ENCODE measurements at regions of chr10 and their contacts with region 1.

Region 1: GRCh38 chr10:89701238-89702120 is at the start of gene KIF20B:
- DNase-seq: peak; percentile 96 to 97
- H3K4me3 ChIP-seq: peak within 1 kb of the TSS; percentile 16 to 62 (median 58)
- H3K27ac ChIP-seq: peak within 1 kb of the TSS; percentile 55 to 92 (median 85)
- H3K4me1 ChIP-seq: peaks cover 16 to 23% of the 10 kb centered on the region in 2 donors
- H3K27me3 ChIP-seq: no peaks in the 10 kb centered on the region
- CTCF ChIP-seq: peak in 5 of 6 experiments; percentile 12 to 83 (median 53)
- POLR2A ChIP-seq: peak in 1 of 2 donors; percentile 97
- total RNA-seq, gene KIF20B: 3.8 to 6.2 (median 4.5) TPM

Region 2: GRCh38 chr10:89426230-89426868 is 275.1 kb before region 1 on chr10:
- intact Hi-C with region 1: loop called (anchors 5 kb)
- DNase-seq: no peak
- H3K4me3 ChIP-seq: no peak overlapping the region
- H3K27ac ChIP-seq: no peak overlapping the region
- H3K4me1 ChIP-seq: peaks cover 4 to 13% of the 10 kb centered on the region in 2 donors
- H3K27me3 ChIP-seq: no peaks in the 10 kb centered on the region
- CTCF ChIP-seq: peak; percentile 46 to 91 (median 84)
- POLR2A ChIP-seq: no peak

Region 3: DNA sequence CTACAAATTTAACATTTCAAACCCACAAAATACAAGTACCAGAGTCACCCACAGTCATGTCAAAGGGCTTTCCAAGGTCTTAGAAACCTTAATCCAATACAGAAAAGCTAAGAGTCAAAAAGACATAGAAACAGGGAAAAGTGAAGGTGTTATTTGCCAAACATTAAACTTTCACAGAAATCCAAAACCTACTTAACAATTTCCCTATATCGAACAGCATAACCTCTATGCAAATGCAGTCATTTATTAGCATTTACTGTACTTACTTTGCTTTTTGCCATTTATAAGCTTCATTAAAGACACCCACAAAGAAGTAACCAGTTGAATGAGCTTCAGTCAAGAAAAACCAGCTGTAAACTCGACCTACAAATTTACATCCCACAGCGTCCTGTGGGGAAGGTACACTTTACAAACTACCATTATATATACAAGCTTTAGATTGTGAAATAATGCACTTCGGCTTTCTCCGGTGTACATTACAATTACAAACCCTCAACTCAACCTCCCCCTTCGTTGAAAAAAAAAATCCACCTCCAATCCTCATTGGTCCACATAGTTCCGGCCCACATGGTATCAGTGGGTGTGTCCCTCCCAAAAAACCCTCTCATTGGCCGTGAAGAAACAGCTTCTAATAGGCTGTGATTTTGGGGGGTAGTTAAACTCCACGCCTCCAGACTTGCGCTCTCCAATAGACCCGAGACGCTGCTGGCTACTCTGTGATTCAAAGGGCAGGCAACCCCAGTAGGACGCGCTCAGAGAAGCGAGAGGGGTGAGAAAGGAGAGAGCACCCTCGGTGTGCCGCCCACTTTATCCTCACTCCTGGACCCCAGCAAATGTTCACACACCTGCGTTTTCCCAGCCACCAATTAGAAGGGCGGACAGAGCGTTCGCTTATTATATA is 57.8 kb before region 1 on chr10:
- intact Hi-C with region 1: loop called (anchors 10 kb)
- DNase-seq: peak; percentile 88 to 89
- H3K4me3 ChIP-seq: peak overlapping the region in 2 of 3 donors; percentile 70
- H3K27ac ChIP-seq: peak overlapping the region; percentile 96 to 100 (median 98)
- H3K4me1 ChIP-seq: peaks cover 10 to 20% of the 10 kb centered on the region in 2 donors
- H3K27me3 ChIP-seq: no peaks in the 10 kb centered on the region
- CTCF ChIP-seq: peak in 1 of 6 experiments; percentile 7
- POLR2A ChIP-seq: peak; percentile 95 to 100

Measured in thyroid gland (tissue), 4 donors.